WTC11 (cell line): ENCODE measurements at regions of chr15 and their contacts with region 1.

Region 1: GRCh38 chr15:40217159-40217824 is 21.6 kb upstream of the PAK6 start:
- DNase-seq: no peak
- ATAC-seq: peak; percentile 87
- H3K4me3 Mint-ChIP-seq: no peak overlapping the region
- H3K27ac Mint-ChIP-seq: no peak overlapping the region
- H3K4me1 Mint-ChIP-seq: no peaks in the 10 kb centered on the region
- H3K27me3 Mint-ChIP-seq: no peaks in the 10 kb centered on the region
- CTCF ChIP-seq: peak; percentile 71

Region 2: GRCh38 chr15:40238532-40239403 is 21.5 kb after region 1 on chr15 and contains the start of gene PAK6:
- CTCF ChIA-PET with region 1: interaction called, 23 read pairs
- POLR2A ChIA-PET with region 1: interaction called, 4 read pairs
- DNase-seq: peak; percentile 82
- ATAC-seq: peak; percentile 92
- H3K4me3 Mint-ChIP-seq: peak within 1 kb of the TSS; percentile 60
- H3K27ac Mint-ChIP-seq: no peak within 1 kb of the TSS
- H3K4me1 Mint-ChIP-seq: peaks cover 12% of the 10 kb centered on the region
- H3K27me3 Mint-ChIP-seq: no peaks in the 10 kb centered on the region
- CTCF ChIP-seq: no peak
- total RNA-seq, gene PAK6: 8.7 to 11.7 TPM (median 9.6 TPM) in 3 replicates

Region 3: GRCh38 chr15:40252438-40253166 is 35.3 kb after region 1 on chr15:
- CTCF ChIA-PET with region 1: interaction called, 26 read pairs
- POLR2A ChIA-PET with region 1: no interaction called
- DNase-seq: peak; percentile 68
- ATAC-seq: peak; percentile 70
- H3K4me3 Mint-ChIP-seq: peak overlapping the region; percentile 73
- H3K27ac Mint-ChIP-seq: no peak overlapping the region
- H3K4me1 Mint-ChIP-seq: peaks cover 18% of the 10 kb centered on the region
- H3K27me3 Mint-ChIP-seq: peaks cover 38% of the 10 kb centered on the region
- CTCF ChIP-seq: no peak

Region 4: DNA sequence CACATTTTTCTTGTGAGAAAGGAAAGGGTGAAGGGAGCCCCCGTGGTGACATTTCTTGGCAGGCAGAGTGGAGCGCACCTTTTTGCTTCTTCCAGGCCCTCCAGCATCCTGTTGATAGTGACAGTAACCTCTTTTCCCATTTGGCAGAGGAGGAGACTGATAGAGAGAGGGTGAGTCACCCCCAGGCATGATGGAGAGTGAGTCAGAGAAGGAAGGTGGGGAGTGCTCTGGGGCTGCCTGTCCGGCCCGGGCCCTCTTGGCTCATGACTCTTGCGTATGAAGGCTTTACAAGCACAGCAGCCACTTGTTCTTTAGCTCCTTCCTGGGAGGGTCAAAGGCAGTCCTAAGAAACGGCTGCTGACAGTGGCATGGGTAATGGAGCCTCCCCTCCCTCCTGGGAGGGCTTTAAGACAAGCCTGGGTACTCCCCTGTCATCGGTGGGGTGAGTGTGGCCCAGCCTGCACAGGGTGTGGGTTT is 49.6 kb after region 1 on chr15:
- CTCF ChIA-PET with region 1: interaction called, 273 read pairs
- POLR2A ChIA-PET with region 1: interaction called, 3 read pairs
- DNase-seq: no peak
- ATAC-seq: no peak
- H3K4me3 Mint-ChIP-seq: no peak overlapping the region
- H3K27ac Mint-ChIP-seq: no peak overlapping the region
- H3K4me1 Mint-ChIP-seq: peaks cover 12% of the 10 kb centered on the region
- H3K27me3 Mint-ChIP-seq: no peaks in the 10 kb centered on the region
- CTCF ChIP-seq: no peak

Region 5: DNA sequence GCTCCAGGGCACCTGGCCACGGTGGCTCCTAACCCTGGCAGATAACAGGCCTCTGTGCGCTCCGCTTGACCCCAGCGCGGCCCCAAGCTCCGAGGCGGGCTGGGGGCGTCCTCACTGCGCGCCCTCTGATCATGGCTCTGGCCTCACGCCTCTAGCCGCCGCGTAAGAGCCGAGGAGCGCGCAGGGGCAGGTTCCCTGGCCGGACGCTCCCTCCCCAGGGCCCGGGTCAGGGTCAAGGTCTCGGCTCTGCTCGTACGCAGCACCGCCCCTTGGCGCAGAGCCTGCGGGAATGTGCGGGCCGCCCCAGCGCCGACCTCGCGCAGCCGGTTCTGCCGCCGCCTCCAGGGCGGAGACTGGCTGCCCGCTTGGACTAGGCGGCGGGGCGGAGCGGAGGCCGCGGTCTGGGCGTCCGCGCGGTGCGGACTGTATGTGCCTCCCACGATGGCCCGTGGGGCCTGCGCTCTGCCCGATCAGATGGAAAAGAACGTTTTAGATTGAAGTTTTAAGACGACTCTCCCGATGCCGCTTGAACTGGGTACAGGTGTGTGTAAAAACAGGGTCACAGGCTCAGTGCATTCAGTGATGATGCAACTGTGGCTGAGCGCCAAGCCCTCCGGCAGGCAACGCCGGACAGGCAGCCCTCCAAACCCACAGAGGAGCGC is 294.3 kb after region 1 on chr15:
- CTCF ChIA-PET with region 1: no interaction called
- POLR2A ChIA-PET with region 1: no interaction called
- DNase-seq: peak; percentile 84
- ATAC-seq: peak; percentile 83
- H3K4me3 Mint-ChIP-seq: peak overlapping the region; percentile 85
- H3K27ac Mint-ChIP-seq: no peak overlapping the region
- H3K4me1 Mint-ChIP-seq: peaks cover 20% of the 10 kb centered on the region
- H3K27me3 Mint-ChIP-seq: peaks cover 57% of the 10 kb centered on the region
- CTCF ChIP-seq: no peak

Region 6: DNA sequence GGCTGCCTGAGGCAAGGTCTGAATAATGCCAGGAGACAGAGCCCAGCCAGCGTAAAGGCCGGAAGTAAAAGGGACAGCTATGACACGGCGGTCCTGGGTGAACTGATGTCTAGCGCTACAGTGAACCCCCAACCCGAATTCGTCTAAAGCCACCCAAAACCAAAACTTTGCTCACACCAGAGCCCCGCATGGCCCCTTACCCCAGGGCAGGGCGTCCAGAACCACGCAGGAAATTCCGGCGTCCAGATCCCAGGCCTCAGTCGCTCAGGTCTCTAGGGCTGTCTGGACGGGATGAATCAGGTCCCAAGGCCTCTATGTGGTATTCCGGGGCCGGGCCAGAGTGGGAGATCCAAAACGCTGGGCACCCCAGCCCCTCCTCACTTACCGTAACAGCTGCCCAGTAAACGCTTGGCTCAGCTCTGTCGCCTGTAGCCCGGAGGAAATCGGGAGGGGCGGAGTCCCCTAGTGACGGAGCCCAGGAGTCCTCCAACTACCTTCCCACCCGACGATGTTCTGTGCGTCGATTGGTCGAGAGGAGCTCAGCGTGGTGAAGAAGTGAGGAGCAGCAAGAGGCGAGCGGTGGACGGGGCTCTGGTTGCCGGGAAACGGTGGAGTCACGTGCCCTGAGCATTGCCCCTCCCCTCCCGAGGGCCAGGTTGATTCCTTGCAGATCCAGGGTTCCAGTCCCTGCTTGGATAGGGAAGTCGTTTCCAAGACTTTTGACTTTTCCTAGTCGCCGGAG is 347.5 kb after region 1 on chr15 and contains the start of gene CCDC32:
- CTCF ChIA-PET with region 1: no interaction called
- POLR2A ChIA-PET with region 1: no interaction called
- DNase-seq: peak; percentile 97
- ATAC-seq: peak; percentile 98
- H3K4me3 Mint-ChIP-seq: peak within 1 kb of the TSS; percentile 89
- H3K27ac Mint-ChIP-seq: peak within 1 kb of the TSS; percentile 92
- H3K4me1 Mint-ChIP-seq: peaks cover 23% of the 10 kb centered on the region
- H3K27me3 Mint-ChIP-seq: no peaks in the 10 kb centered on the region
- CTCF ChIP-seq: no peak
- total RNA-seq, gene CCDC32: 12.8 to 15.6 TPM (median 13.7 TPM) in 3 replicates